PC-9 (cell line): ENCODE measurements at regions of chr2 and their contacts with region 1.

Region 1: DNA sequence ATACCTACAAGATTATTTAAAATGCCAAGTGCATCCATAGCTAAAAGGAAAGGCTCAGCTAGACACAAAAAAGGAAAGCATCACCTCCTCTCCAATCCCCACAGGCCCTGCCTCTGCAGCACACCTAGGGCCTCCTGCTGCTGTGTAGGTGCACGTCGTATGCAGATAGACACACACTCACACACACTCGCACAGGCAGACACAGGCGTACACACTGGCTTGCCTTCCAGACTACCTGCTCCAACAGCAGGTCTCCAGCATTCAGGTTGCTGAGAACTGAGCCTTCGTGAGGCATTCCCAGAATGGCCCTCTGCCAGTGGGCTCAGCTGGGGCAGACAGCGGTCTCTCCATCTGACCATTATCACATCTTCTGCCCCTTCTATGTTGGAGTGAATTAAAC is 35.3 kb upstream of the FRZB start:
- DNase-seq: no peak
- H3K4me3 ChIP-seq: no peak overlapping the region
- H3K27ac ChIP-seq: no peak overlapping the region
- H3K4me1 ChIP-seq: no peaks in the 10 kb centered on the region
- H3K27me3 ChIP-seq: no peaks in the 10 kb centered on the region
- CTCF ChIP-seq: no peak

Region 2: DNA sequence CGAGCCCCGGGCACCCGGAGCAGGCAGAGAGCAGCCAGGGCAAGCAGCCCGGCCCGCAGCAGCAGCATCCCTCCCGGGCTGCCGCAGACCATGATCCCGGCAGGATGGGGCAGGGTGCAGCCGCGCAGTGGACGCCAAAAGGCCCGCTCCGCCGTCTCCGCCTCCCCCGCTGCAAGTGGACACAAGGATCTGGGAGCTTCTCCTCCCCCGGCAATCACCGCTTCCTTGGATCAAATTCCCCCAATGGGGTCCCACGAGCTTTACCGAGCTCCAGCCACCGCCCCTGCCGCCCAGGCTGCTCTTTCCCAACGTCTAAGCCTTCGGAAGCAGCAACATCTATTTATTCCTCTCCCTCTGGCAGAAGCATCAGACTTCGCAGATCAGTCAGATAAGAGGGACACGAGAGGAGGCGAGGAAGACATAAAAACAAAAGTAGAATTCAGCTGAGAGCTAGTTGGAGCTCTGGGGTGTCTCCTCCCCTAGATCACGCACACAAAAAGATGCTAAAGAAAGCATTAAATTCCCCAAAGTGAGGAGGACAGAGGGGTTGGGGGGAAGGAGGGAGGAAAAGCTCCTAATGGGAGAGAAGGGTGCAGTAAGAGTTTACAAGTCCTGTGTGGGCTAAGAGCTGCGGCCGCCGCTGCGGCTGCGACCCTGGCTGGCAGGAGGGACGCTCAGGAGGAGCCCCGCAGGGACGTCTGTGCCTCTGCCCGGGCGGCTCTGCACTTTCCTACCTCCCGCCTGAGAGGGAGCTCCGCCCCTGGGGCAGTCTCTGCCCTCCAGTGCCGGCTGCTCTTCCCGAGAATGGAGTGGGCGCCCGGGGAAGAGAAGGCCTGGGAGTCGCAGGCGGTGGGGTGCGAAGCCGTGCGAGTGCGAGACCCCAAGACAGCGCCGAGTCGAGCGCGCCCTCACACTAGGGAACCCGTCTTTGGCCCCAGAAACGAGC is 35.0 kb before region 1 on chr2 and contains the start of gene FRZB:
- CTCF ChIA-PET with region 1: no interaction called
- POLR2A ChIA-PET with region 1: no interaction called
- intact Hi-C with region 1: loop called (anchors 5 kb)
- DNase-seq: peak in 1 of 2 experiments; percentile 28
- H3K4me3 ChIP-seq: no peak within 1 kb of the TSS
- H3K27ac ChIP-seq: no peak within 1 kb of the TSS
- H3K4me1 ChIP-seq: no peaks in the 10 kb centered on the region
- H3K27me3 ChIP-seq: no peaks in the 10 kb centered on the region
- CTCF ChIP-seq: no peak
- total RNA-seq, gene FRZB: 0.15 TPM in 2 replicates

Region 3: GRCh38 chr2:183070942-183071844 is 169.4 kb after region 1 on chr2:
- CTCF ChIA-PET with region 1: no interaction called
- POLR2A ChIA-PET with region 1: no interaction called
- intact Hi-C with region 1: no loop called
- DNase-seq: peak in 1 of 2 experiments; percentile 27
- H3K4me3 ChIP-seq: no peak overlapping the region
- H3K27ac ChIP-seq: no peak overlapping the region
- H3K4me1 ChIP-seq: no peaks in the 10 kb centered on the region
- H3K27me3 ChIP-seq: no peaks in the 10 kb centered on the region
- CTCF ChIP-seq: peak; percentile 64